Mammary epithelial cell (primary cell): ENCODE measurements at regions of chr18 and their contacts with region 1.

Region 1: DNA sequence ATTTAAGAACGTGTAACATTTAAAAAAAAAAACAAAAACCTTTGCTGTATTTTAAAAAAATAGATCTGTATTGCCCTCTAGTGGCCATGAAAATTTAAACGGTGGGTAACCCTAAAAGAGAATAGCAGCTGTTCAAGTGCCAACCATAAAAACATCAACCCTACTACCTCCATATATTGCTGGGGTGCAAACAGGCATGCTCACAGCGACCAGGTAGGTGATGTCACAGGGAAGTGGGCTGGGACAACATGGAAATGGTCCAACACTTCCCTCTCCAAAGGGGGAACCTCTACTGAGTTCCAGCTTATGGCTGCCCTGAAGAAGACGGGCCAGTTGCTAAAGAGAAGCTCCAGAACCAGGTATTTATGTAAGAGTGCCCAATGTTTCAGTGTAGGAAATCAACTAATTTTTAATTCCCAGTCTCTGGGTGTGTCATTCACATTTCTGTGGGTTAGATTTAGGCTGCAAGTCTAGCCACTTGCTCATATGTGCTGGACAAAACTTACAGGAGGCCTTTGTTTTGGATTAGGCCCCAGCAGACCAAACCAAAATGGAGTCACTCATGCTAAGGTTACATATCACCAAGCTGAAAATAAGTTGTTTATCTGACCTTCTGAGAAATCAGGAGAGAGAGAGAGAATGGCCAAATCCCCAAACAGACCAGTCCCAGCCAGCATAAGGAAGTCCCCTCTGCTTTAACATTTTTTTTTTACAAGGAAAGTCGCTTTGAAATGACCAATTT is 54.5 kb downstream of the SKA1 start:
- DNase-seq: no peak
- H3K4me3 ChIP-seq: no peak overlapping the region
- H3K27ac ChIP-seq: no peak overlapping the region
- H3K4me1 ChIP-seq: no peaks in the 10 kb centered on the region
- H3K27me3 ChIP-seq: no peaks in the 10 kb centered on the region
- CTCF ChIP-seq: peak; percentile 31 to 43

Region 2: DNA sequence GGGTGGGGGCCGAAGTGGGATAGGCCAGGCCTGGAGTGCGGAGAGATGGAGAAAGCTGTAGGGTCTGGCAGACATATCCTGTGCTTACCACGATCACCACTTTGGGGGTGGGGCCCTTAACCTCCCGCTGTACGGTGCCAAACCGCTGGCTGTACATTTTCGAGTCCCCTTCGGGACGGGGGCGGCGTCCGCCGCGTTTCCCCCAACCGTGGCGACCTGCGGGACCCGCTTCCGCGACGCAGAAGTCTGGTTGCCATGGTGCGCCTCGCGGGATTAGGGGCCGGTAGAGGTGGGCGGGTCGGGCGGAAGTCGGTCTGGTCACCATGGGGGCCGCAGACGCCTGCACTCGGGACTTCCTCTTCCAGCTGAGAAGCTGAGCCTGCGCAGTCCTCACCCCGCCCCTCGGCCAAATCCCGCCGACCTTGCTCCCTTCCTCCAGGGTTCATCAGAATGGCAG is 163.1 kb before region 1 on chr18 and contains the start of gene CFAP53:
- CTCF ChIA-PET with region 1: no interaction called
- dilution Hi-C with region 1: no loop called
- in situ Hi-C with region 1: no loop called
- intact Hi-C with region 1: loop called (anchors 5 kb)
- DNase-seq: peak; percentile 63
- H3K4me3 ChIP-seq: peak within 1 kb of the TSS; percentile 64 to 84 (median 65)
- H3K27ac ChIP-seq: peak within 1 kb of the TSS; percentile 28
- H3K4me1 ChIP-seq: peaks cover 12% of the 10 kb centered on the region
- H3K27me3 ChIP-seq: no peaks in the 10 kb centered on the region
- CTCF ChIP-seq: no peak
- total RNA-seq, gene CFAP53: 0.67 to 1.7 TPM

Region 3: DNA sequence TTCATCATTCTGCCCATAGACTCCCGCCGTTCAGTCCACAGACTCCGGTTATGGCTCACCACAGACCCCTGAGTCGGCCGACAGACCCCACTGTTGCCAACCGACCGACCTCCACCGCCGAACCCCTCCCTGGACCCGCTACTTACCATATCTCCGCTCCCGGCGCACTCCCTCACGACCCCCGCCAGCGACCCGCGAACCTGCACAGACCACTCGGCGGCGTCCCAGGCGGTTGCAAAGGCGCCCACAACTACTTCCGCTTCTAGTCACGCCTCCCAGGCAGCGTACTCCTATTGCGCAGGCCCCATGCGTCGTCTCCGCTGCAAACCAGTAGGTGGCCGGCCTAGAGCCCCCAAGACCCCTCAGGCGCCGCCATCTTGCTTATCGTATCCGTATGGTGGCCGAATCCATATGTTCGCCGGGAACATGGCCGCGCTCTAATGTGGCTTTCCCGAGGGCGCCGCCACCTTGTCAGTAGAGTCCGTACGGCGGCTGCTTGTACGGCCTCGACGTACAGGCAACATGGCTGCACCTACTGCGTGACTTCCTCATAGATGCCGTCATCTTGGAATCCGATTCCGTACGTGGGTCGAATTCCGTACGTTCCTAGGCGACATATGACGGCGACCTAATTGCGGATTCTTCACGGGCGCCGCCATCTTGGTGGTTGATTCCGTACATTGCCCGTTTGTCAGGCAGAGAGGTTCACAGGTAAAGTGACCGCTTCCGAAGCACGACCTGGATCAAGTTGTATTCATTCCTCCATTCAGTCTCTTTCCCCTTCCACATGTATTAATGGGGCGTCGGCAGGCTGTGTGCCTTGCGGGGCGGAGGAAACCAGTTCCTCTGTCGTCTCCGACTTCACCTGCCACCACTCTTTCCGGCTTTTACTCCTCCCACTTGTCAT is 141.7 kb before region 1 on chr18 and contains the start of gene CXXC1:
- CTCF ChIA-PET with region 1: no interaction called
- dilution Hi-C with region 1: no loop called
- in situ Hi-C with region 1: no loop called
- intact Hi-C with region 1: loop called (anchors 5 kb)
- DNase-seq: peak; percentile 99
- H3K4me3 ChIP-seq: peak within 1 kb of the TSS; percentile 88 to 97 (median 95)
- H3K27ac ChIP-seq: peak within 1 kb of the TSS; percentile 66
- H3K4me1 ChIP-seq: peaks cover 26% of the 10 kb centered on the region
- H3K27me3 ChIP-seq: no peaks in the 10 kb centered on the region
- CTCF ChIP-seq: peak; percentile 39 to 51
- total RNA-seq, gene CXXC1: 27.7 to 78.2 TPM